Ovary (tissue), 10 donors: ENCODE measurements at regions of chr17 and their contacts with region 1.

Region 1: DNA sequence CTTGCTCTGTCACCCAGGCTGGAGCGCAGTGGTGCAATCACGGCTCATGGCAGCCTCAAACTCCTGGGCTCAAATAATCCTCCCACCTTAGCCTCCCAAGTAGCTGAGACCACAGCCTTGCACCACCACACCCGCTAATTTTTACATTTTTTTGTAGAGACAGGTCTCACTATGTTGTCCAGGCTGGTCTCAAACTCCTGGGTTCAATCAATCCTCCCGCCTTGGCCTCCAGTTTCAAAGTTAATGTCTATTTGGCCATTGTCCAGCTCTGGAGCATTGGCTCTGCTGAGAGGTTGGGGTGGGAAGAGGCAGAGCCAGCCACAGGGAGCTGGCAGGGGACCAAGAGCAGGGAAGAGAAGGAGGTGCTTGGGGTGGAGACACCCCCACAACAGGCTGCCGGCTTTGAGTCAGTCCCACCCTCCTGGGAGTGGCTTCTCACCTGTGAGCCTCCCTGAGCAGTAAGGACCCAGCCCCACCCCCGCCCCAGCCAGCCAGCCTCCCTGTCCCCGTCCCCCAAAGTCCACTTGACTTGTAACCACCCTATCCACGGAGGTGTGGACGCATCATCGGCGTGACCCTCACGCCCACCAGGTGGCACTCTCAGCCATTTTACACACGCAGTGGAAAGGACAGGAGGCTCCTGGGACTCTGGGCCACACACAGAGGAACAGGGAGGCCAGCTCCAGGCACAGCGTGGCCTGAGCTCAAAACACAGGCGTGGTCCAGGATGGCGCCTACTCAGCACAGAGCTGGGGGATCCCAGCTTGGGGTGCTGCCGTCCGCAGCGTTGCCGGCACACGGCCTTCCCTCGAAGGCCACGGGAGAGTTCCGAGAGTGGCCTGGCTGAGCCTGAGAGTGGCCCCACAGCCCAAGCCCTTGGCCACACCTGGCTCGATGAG is 22.8 kb upstream of the PVALEF start:
- DNase-seq: peak; percentile 64 to 84 (median 76)
- H3K4me3 ChIP-seq: no peak overlapping the region
- H3K27ac ChIP-seq: no peak overlapping the region
- H3K4me1 ChIP-seq: peaks cover 3% of the 10 kb centered on the region
- H3K27me3 ChIP-seq: no peaks in the 10 kb centered on the region
- CTCF ChIP-seq: peak; percentile 33 to 45 (median 43)
- EP300 ChIP-seq: no peak
- POLR2A ChIP-seq: no peak

Region 2: DNA sequence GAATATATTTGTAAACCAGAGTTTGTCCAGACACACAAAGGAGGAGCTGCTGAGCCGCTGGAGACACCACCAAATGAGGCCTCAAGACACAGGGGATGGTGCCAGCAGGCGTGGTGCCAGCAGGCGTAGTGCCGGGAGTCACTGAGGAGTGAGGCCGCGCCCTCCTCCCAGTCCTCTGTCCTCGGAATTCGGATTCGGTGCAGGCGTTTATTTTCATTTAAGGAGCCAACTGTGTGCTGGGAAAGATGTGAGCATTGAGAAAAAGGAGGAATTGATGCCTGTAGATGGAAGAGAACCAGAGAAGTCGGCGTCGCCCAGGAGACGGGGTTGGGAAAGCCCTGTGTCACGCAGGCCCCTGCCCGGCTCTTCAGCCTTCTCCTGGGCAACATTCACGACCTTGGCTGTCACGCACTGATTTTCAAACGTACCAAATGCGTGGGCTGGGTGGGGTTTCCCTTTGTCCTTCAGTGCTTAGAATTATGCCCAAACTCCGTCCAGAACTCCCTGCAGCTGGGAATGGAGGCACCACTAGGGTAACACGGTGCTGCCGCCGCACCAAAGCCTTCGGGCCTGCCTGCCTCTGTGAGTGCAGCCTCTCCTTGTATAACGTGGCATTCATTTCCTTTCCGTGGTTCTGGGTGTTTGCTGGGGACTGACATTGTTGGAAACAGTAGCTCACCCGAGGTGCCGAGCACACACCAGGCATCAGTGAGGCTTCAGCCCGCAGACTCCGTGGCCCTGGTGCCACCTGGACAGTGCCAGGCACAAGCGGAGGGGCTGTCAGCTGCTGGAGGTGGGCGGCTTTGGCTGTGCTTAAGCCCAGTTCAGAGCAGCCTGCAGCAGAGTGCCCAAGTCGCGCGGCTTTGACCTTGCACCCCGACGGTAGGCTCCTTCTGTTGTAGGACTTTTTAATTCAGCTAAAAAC is 199.9 kb before region 1 on chr17:
- intact Hi-C with region 1: no loop called
- DNase-seq: peak; percentile 97 to 98 (median 98)
- H3K4me3 ChIP-seq: no peak overlapping the region
- H3K27ac ChIP-seq: peak overlapping the region in 1 of 2 donors; percentile 65
- H3K4me1 ChIP-seq: peaks cover 13% of the 10 kb centered on the region
- H3K27me3 ChIP-seq: no peaks in the 10 kb centered on the region
- CTCF ChIP-seq: no peak
- EP300 ChIP-seq: no peak
- POLR2A ChIP-seq: no peak

Region 3: DNA sequence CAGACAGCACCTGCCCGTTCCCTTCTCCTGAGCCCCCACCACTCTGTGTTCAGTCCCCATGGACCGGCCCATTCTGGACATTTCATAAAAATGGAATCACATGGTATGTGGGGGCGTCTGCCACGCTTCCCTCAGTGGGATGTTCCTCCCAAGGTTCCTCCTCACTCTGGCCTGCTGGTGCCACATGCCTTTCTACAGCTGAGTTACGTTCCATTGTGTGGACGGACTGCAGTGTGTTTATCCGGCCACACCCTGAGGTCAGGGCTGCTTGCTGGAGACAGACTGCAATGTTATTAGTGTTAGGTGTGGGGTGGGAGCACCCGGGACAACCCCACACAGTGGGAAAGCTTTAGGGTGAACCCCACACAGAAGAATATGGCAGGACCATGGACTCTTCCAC is 29.4 kb after region 1 on chr17:
- intact Hi-C with region 1: no loop called
- DNase-seq: no peak
- H3K4me3 ChIP-seq: no peak overlapping the region
- H3K27ac ChIP-seq: no peak overlapping the region
- H3K4me1 ChIP-seq: no peaks in the 10 kb centered on the region
- H3K27me3 ChIP-seq: no peaks in the 10 kb centered on the region
- CTCF ChIP-seq: no peak
- EP300 ChIP-seq: no peak
- POLR2A ChIP-seq: no peak

Region 4: DNA sequence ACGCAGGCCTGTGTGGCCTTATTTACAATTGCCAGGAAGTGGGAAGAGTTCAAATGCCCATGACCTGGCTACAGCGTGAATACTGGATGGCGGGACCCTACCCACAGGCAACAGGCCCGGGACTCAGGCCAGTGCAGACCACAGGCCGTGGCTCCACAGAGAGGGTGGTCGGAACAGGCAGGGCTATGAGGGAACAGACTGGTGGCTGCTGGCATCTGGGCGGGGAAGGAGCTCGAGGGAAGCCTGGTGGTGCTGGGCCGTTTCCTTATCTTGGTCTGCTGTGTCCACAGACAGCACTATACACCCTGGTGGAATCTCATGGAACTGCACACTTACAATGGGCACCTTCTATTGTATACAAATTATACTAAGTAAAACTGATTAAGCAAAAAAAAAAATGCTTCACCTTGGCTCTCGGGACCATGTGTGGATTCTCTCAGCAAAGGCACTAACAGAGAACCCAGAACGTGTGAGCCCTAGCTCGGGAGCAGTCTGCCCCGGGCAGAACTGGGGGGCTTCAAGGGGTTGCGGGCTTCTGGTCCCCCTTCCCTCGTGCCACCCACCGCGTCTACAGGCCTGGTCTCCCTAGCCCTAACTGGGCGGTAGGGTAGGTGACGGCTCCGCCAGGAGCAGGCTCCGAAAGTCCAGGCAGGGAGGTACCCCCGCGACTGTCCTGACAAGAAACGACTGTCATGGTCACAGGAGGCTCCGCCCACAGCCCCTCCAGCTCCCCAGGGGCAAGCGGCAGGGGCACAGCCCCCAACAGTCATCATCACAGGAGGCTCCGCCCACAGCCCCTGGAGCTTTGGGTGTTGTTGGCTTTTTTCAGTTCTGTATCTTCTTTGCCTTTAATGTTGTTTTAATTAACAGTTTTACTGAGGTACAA is 58.4 kb after region 1 on chr17:
- intact Hi-C with region 1: loop called in 1 of 4 experiments (anchors 10 kb)
- DNase-seq: no peak
- H3K4me3 ChIP-seq: no peak overlapping the region
- H3K27ac ChIP-seq: no peak overlapping the region
- H3K4me1 ChIP-seq: no peaks in the 10 kb centered on the region
- H3K27me3 ChIP-seq: no peaks in the 10 kb centered on the region
- CTCF ChIP-seq: no peak
- EP300 ChIP-seq: no peak
- POLR2A ChIP-seq: no peak

Region 5: GRCh38 chr17:81222906-81223761 is 80.6 kb after region 1 on chr17 and contains the start of gene CEP131:
- intact Hi-C with region 1: loop called in 1 of 4 experiments (anchors 5 kb)
- DNase-seq: peak; percentile 99
- H3K4me3 ChIP-seq: peak within 1 kb of the TSS; percentile 92
- H3K27ac ChIP-seq: peak within 1 kb of the TSS; percentile 31 to 78
- H3K4me1 ChIP-seq: peaks cover 9% of the 10 kb centered on the region
- H3K27me3 ChIP-seq: no peaks in the 10 kb centered on the region
- CTCF ChIP-seq: no peak
- EP300 ChIP-seq: no peak
- POLR2A ChIP-seq: no peak
- total RNA-seq, gene CEP131: 5.5 to 10.7 (median 8.8) TPM

Region 6: DNA sequence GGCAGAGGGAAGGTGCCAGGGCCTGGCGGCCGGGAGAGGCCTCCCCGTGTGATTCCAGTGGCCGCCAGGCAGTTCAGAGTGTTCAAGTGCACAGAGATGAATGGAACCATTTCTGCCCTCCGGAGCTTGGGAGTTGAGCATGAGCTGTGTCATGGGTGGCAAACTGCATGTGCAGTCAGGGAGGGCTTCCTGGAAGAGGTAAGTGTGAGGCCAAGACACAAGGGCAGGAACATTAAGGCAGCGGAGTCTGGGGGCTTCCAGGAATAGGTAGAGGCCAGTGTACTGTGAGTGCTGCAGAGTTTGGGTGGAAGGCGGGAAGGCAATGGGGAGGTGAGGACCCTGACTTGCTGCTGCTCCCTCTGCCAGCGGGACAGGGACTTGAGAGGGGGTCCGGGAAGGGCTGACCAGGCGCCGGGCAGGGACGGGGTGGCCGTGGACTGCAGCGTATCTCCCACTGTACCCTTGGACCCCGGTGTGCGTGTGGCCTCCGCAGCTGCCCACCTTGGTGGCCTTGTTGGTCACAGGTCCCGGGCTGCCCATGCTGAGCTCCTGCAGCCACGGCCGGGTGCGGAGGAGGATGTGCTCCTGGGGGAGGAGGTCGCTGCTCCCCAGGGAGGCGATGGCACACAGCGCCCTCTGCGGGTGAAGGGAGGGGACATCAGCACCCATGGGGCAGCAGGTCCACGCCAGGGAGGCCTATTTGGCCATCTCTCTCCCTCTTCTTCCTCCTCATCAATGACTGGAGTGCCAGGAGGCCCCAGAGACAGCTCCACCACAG is 87.7 kb after region 1 on chr17:
- intact Hi-C with region 1: loop called in 1 of 4 experiments (anchors 5 kb)
- DNase-seq: peak in 1 of 5 donors; percentile 42
- H3K4me3 ChIP-seq: no peak overlapping the region
- H3K27ac ChIP-seq: no peak overlapping the region
- H3K4me1 ChIP-seq: no peaks in the 10 kb centered on the region
- H3K27me3 ChIP-seq: no peaks in the 10 kb centered on the region
- CTCF ChIP-seq: no peak
- EP300 ChIP-seq: no peak
- POLR2A ChIP-seq: no peak

Region 7: DNA sequence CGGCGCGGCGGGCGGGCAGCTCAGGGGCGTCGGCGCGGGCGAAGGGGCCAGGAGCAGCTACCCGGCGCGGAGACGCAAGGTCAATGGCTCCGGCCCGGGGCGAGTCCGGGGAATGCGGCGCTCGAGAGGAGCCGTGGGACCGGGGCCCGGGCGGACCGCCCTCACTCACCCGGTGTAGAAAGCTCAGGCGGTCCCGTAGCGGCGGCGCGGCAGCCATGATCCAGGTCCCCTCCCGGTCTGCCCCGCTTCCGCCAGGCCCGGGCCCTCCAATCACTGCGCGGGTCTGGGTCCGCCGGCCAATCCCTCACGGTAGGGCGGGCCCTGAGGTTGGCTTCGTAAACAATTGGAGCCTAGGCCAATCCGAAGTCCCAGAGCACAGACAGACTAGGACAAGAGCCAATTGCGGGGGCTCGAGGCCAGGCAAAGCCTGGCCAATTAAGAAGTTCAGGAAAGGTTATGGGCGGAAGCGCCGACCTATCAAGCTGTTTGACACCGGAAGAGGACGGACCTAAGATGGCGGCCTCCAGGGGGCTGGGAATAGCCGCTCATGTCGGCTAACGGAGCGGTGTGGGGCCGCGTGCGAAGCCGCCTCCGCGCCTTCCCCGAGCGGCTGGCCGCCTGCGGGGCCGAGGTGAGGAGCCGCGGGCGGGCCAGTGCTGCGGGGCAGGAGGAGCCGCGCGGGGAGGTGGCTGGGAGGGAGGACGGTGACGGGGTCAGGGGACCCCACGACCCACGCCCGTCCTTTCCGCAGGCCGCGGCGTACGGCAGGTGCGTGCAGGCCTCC is 96.5 kb after region 1 on chr17 and contains the starts of genes NDUFAF8 and TEPSIN:
- intact Hi-C with region 1: loop called in 3 of 4 experiments (anchors 2 to 5 kb)
- DNase-seq: peak; percentile 97 to 98 (median 97)
- H3K4me3 ChIP-seq: peak within 1 kb of the TSS; percentile 99
- H3K27ac ChIP-seq: peak within 1 kb of the TSS in 1 of 2 donors; percentile 82
- H3K4me1 ChIP-seq: peaks cover 5% of the 10 kb centered on the region
- H3K27me3 ChIP-seq: no peaks in the 10 kb centered on the region
- CTCF ChIP-seq: peak in 2 of 3 donors; percentile 27 to 45
- EP300 ChIP-seq: no peak
- POLR2A ChIP-seq: peak; percentile 36
- total RNA-seq, gene NDUFAF8: 26.6 to 66.3 (median 33.9) TPM
- total RNA-seq, gene TEPSIN: 15.8 to 30.2 (median 25.3) TPM

Region 8: DNA sequence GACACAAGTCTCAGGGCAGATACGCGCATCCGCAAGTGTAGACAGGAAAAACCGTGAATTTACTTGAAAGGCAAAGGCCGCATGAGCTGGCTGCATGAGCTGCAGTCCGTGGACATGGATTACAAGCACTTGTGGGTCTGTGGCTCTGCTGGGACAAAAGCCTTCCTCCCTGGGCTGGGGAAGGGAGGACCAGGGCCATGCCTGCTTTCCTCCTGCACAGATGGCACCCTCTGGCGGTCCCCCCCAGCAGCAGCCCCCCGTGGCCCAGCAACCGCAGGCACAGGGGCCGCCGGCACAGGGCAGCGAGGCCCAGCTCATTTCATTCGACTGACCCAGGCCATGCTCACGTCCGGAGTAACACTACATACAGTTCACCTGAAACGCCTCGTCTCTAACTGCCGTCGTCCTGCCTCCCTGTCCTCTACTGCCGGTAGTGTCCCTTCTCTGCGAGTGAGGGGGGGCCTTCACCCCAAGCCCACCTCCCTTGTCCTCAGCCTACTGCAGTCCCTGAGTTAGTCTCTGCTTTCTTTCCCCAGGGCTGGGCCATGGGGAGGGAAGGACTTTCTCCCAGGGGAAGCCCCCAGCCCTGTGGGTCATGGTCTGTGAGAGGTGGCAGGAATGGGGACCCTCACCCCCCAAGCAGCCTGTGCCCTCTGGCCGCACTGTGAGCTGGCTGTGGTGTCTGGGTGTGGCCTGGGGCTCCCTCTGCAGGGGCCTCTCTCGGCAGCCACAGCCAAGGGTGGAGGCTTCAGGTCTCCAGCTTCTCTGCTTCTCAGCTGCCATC is 558.9 kb after region 1 on chr17:
- intact Hi-C with region 1: no loop called
- DNase-seq: no peak
- H3K4me3 ChIP-seq: peak overlapping the region; percentile 77
- H3K27ac ChIP-seq: no peak overlapping the region
- H3K4me1 ChIP-seq: peaks cover 6% of the 10 kb centered on the region
- H3K27me3 ChIP-seq: no peaks in the 10 kb centered on the region
- CTCF ChIP-seq: no peak
- EP300 ChIP-seq: no peak
- POLR2A ChIP-seq: no peak